ENCODE measurements at regions of chrX and their contacts with region 1.

Region 1: DNA sequence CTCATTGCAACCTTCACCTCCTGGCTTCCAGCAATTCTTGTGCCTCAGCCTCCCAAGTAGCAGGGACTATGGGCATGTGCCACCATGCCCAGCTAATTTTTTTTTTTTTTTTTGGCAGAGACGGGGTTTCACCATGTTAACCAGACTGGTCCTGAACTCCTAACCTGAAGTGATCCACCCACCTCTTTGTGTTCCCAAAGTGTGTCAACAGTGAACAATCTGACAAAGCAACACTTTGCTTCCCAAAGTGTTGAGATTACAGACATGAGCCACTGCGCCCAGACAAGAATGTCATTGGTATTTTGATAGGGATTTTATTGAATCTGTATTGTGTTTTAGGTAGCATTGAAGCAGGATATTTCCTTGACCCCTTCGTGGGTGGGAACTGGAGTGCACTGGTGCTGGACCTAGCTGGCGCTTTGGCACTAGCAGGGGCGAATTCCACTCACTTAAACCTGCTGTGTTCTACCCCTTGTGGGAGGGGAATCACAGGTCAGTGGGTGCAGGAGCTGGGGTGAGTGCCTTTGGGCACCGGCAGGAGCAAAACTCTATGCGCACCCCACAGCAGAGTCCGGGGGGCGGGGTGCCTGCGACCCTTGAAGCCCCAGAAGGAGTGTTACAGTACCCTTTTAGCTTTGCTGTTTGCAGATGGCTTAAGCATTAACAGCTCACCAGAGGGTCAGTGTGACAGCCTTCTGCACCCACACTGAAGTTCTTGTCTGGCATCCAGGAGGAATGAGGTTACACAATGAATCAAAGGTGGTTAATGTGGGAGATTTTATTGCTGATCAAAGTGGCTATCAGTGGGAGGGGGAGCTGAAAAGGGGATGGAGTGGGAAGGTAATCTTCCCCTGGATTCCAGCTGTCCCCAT is 21.9 kb downstream of the KLF8 start:
- DNase-seq: no peak
- H3K4me3 ChIP-seq: no peak overlapping the region
- H3K27ac ChIP-seq: no peak overlapping the region
- H3K4me1 ChIP-seq: no peaks in the 10 kb centered on the region
- H3K27me3 ChIP-seq: no peaks in the 10 kb centered on the region
- CTCF ChIP-seq: no peak
- POLR2A ChIP-seq: no peak

Region 2: GRCh38 chrX:56029691-56030090 is 224.4 kb before region 1 on chrX:
- intact Hi-C with region 1: no loop called
- DNase-seq: no peak
- H3K4me3 ChIP-seq: no peak overlapping the region
- H3K27ac ChIP-seq: no peak overlapping the region
- H3K4me1 ChIP-seq: no peaks in the 10 kb centered on the region
- H3K27me3 ChIP-seq: no peaks in the 10 kb centered on the region
- CTCF ChIP-seq: no peak
- POLR2A ChIP-seq: no peak

Region 3: DNA sequence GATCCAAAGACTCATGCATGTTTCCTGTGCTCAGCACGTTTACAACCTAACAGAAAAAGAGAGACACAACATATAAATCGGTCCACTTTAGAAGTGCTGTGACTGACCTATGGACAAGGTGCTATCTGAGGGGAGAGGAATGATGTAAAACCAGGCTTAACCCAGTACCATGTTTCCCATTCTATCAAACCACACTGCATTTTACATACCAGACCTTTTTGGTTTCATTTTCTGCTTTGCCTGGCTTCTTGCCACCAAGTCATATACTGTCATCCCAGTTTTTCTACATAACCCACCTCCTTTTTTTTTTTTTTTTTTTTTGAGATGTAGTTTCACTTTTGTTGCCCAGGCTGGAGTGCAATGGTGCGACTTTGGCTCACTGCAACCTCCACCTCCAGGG is 60.3 kb after region 1 on chrX:
- intact Hi-C with region 1: loop called (anchors 10 kb)
- DNase-seq: no peak
- H3K4me3 ChIP-seq: no peak overlapping the region
- H3K27ac ChIP-seq: no peak overlapping the region
- H3K4me1 ChIP-seq: no peaks in the 10 kb centered on the region
- H3K27me3 ChIP-seq: no peaks in the 10 kb centered on the region
- CTCF ChIP-seq: no peak
- POLR2A ChIP-seq: no peak